CD8-positive, alpha-beta T cell (primary cell): ENCODE measurements at regions of chr19 and their contacts with region 1.

Region 1: DNA sequence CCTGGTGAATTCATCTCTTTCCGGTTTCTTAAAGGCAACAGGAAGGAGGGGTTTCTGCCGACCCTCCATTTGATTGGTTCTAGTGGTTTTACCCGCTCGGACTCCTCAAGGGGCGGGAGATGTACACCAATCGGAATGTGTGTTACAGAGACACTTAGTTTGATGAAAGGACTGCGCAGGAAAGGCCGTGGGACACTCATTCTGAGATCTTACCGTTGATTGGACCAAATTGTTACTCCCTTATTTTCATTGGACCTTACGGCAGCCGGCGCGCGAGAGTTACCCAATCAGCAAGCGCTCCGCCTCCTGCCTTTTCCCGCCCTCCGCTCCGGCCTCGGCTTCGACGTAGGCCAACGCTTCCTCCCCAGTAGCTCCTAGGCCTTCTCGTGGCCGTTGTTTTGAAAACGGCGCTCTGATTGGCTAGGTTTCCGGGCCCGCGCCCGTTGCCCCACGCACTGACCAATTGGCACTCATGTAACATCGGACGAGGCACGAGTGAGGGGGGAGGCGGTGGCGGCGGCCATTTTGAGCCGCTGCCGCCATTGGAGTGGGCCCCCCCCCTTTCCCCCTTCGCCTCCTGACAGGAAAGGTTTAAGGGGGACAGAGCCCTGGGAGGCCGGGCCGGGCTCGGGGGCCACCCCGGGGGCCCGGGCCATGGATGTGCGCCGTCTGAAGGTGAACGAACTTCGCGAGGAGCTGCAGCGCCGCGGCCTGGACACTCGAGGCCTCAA is at the start of gene HNRNPUL1:
- DNase-seq: peak; percentile 98 to 100 (median 100)
- ATAC-seq: peak; percentile 62
- H3K4me3 ChIP-seq: peak within 1 kb of the TSS; percentile 71 to 87
- H3K4me3 Mint-ChIP-seq: peak within 1 kb of the TSS; percentile 94
- H3K27ac ChIP-seq: peak within 1 kb of the TSS; percentile 97 to 98
- H3K27ac Mint-ChIP-seq: peak within 1 kb of the TSS; percentile 100
- H3K4me1 ChIP-seq: peaks cover 36% of the 10 kb centered on the region
- H3K4me1 Mint-ChIP-seq: peaks cover 43% of the 10 kb centered on the region
- H3K27me3 ChIP-seq: no peaks in the 10 kb centered on the region
- H3K27me3 Mint-ChIP-seq: no peaks in the 10 kb centered on the region
- CTCF ChIP-seq: no peak
- total RNA-seq, gene HNRNPUL1: 416 to 448 TPM

Region 2: DNA sequence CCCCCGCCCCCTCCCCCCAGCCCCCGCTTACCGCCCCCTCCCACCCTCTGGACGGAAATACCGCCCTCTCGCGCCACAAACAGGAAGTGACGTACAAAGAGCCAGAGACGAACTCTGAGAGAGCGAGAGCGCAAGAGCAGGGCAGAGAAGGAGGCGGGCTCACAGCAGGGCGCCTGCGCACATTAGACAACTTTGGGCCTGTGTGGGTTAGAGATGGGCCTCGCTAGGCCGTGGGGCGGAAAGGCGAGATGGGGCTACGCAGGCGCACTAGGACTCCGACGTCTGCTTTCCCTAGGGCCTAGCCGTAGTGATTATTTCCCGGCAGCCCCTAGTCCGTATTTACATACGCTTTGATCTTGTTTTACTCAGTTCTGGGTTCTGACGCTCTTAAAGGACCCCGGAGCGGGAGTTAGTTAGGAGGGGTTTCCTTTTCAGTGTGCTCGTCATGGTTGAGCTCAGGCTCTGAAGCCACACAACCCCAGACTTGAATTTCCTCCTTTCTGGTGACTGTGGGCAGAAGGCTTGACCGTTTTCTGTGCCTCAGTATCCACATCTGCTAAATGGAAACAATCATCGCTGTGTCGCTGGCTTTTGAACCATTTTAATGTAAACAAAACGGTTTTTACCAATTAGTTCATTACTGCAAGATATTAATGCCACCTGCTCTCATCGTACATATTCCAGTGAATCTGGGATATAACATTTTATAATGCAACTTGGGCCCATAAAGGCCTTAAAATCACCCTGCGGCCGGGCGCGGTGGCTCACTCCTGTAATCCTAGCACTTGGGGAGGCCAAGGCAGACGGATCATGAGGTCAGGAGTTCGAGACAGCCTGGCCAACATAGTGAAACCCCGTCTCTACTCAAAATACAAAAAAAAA is 978.4 kb before region 1 on chr19:
- CTCF ChIA-PET with region 1: no interaction called
- POLR2A ChIA-PET with region 1: no interaction called
- intact Hi-C with region 1: loop called (anchors 2 kb)
- DNase-seq: peak; percentile 95 to 100 (median 96)
- ATAC-seq: peak; percentile 72
- H3K4me3 ChIP-seq: peak overlapping the region; percentile 63 to 80
- H3K4me3 Mint-ChIP-seq: peak overlapping the region; percentile 98
- H3K27ac ChIP-seq: peak overlapping the region; percentile 92 to 94
- H3K27ac Mint-ChIP-seq: peak overlapping the region; percentile 99
- H3K4me1 ChIP-seq: peaks cover 38% of the 10 kb centered on the region
- H3K4me1 Mint-ChIP-seq: peaks cover 48% of the 10 kb centered on the region
- H3K27me3 ChIP-seq: no peaks in the 10 kb centered on the region
- H3K27me3 Mint-ChIP-seq: no peaks in the 10 kb centered on the region
- CTCF ChIP-seq: no peak

Region 3: DNA sequence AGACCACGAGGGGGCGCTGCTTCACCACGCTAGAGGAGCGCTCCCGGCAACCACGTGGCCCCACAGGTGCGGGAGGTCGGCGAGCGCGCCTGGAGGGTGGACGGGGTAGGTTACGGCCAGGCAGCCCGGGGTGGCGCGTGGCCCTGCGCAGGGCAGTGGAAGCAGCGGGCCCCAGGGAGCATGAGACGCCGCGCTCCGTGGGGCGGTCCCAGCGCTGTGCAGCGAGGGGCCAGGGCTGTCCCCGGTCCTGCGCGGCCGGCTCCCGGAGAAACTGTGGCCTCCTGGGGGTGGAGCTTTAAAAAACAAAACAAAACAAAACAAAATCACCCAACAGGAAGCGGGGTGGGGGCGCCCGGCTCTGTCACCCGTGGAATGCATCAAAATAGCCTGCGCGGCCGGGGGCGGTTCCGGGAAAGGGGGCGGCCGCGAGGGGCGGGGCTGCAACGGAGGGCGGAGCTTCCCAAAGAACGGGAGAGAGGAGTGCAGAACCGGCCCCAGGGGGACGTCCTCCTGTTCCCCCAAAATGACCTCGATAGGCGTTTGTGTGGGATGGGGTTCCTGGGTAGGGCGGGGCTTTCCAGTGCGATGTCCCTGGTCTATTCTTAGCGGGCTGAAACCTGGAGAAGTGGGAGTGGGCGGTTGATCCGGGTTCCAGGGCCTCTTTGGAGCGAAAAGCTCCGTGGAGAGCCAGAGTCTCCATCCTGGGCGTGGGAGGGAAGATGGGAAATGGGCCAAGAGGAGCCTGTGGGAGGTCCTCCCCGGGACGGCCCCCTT is 600.9 kb before region 1 on chr19:
- CTCF ChIA-PET with region 1: no interaction called
- POLR2A ChIA-PET with region 1: interaction called, 7 read pairs
- intact Hi-C with region 1: loop called (anchors 2 to 5 kb)
- DNase-seq: peak; percentile 86 to 98 (median 94)
- ATAC-seq: peak; percentile 82
- H3K4me3 ChIP-seq: peak overlapping the region; percentile 66 to 67
- H3K4me3 Mint-ChIP-seq: peak overlapping the region; percentile 87
- H3K27ac ChIP-seq: peak overlapping the region; percentile 49 to 70
- H3K27ac Mint-ChIP-seq: peak overlapping the region; percentile 80
- H3K4me1 ChIP-seq: peaks cover 11% of the 10 kb centered on the region
- H3K4me1 Mint-ChIP-seq: peaks cover 8% of the 10 kb centered on the region
- H3K27me3 ChIP-seq: no peaks in the 10 kb centered on the region
- H3K27me3 Mint-ChIP-seq: no peaks in the 10 kb centered on the region
- CTCF ChIP-seq: peak; percentile 95

Region 4: DNA sequence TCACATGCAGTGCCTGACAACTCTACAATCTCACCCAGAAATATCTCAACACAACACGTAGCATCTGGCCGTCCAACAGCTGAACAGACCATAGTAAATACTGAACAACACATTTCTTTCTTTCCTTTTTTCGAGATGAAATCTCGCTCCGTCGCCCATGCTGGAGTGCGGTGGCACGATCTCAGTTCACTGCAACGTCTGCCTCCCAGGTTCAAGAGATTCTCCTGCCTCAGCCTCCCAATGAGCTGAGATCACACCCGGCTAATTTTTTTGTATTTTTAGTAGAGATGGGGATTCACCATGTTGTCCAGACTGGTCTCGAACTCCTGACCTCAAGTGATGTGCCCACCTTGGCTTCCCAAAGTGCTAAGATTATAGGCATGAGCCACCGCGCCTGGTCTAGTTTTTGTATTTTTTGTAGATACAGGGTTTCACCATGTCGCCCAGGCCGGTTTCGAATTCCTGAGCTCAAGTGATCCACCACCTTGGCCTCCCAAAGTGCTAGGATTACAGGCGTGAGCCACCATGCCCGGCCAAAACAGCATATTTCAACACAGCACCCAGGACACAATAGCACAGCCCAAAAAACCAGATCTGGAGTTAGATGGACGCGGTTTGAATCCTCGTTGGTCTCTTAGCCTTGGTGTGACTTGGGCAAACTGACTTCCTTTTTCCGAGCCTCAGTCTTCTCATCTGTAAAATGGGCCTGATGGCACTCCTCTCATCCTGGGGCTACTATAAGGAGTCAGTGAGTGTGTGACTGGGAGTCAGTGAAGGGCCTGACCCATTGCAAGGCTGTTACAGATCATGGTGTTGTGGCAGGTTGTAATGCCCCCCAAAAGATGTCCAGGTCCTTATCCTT is 436.4 kb before region 1 on chr19:
- CTCF ChIA-PET with region 1: no interaction called
- POLR2A ChIA-PET with region 1: no interaction called
- intact Hi-C with region 1: loop called in 1 of 2 experiments (anchors 2 kb)
- DNase-seq: no peak
- ATAC-seq: no peak
- H3K4me3 ChIP-seq: no peak overlapping the region
- H3K4me3 Mint-ChIP-seq: peak overlapping the region; percentile 58
- H3K27ac ChIP-seq: peak overlapping the region; percentile 57 to 63
- H3K27ac Mint-ChIP-seq: peak overlapping the region; percentile 94
- H3K4me1 ChIP-seq: peaks cover 26% of the 10 kb centered on the region
- H3K4me1 Mint-ChIP-seq: peaks cover 28% of the 10 kb centered on the region
- H3K27me3 ChIP-seq: no peaks in the 10 kb centered on the region
- H3K27me3 Mint-ChIP-seq: no peaks in the 10 kb centered on the region
- CTCF ChIP-seq: no peak

Region 5: GRCh38 chr19:41276231-41276630 is 12.2 kb after region 1 on chr19:
- CTCF ChIA-PET with region 1: interaction called, 10 read pairs
- POLR2A ChIA-PET with region 1: interaction called, 5 read pairs
- intact Hi-C with region 1: loop called in 1 of 2 experiments (anchors 2 kb)
- DNase-seq: no peak
- ATAC-seq: no peak
- H3K4me3 ChIP-seq: no peak overlapping the region
- H3K4me3 Mint-ChIP-seq: no peak overlapping the region
- H3K27ac ChIP-seq: no peak overlapping the region
- H3K27ac Mint-ChIP-seq: no peak overlapping the region
- H3K4me1 ChIP-seq: no peaks in the 10 kb centered on the region
- H3K4me1 Mint-ChIP-seq: peaks cover 2% of the 10 kb centered on the region
- H3K27me3 ChIP-seq: no peaks in the 10 kb centered on the region
- H3K27me3 Mint-ChIP-seq: no peaks in the 10 kb centered on the region
- CTCF ChIP-seq: no peak

Region 6: GRCh38 chr19:41363753-41364523 is 99.9 kb after region 1 on chr19 and contains the start of gene B9D2:
- CTCF ChIA-PET with region 1: interaction called, 3 read pairs
- POLR2A ChIA-PET with region 1: interaction called, 31 read pairs
- intact Hi-C with region 1: no loop called
- DNase-seq: peak; percentile 95 to 99 (median 98)
- ATAC-seq: peak; percentile 89
- H3K4me3 ChIP-seq: peak within 1 kb of the TSS; percentile 80 to 81
- H3K4me3 Mint-ChIP-seq: peak within 1 kb of the TSS; percentile 98
- H3K27ac ChIP-seq: peak within 1 kb of the TSS; percentile 99 to 100
- H3K27ac Mint-ChIP-seq: peak within 1 kb of the TSS; percentile 100
- H3K4me1 ChIP-seq: peaks cover 27% of the 10 kb centered on the region
- H3K4me1 Mint-ChIP-seq: peaks cover 30% of the 10 kb centered on the region
- H3K27me3 ChIP-seq: no peaks in the 10 kb centered on the region
- H3K27me3 Mint-ChIP-seq: no peaks in the 10 kb centered on the region
- CTCF ChIP-seq: no peak
- total RNA-seq, gene B9D2: 19.6 to 25.9 TPM

Region 7: GRCh38 chr19:41606215-41606837 is 342.3 kb after region 1 on chr19:
- CTCF ChIA-PET with region 1: no interaction called
- POLR2A ChIA-PET with region 1: no interaction called
- intact Hi-C with region 1: no loop called
- DNase-seq: peak in 1 of 9 experiments; percentile 7
- ATAC-seq: no peak
- H3K4me3 ChIP-seq: no peak overlapping the region
- H3K4me3 Mint-ChIP-seq: no peak overlapping the region
- H3K27ac ChIP-seq: no peak overlapping the region
- H3K27ac Mint-ChIP-seq: no peak overlapping the region
- H3K4me1 ChIP-seq: no peaks in the 10 kb centered on the region
- H3K4me1 Mint-ChIP-seq: no peaks in the 10 kb centered on the region
- H3K27me3 ChIP-seq: no peaks in the 10 kb centered on the region
- H3K27me3 Mint-ChIP-seq: peaks cover 13% of the 10 kb centered on the region
- CTCF ChIP-seq: no peak